Cardiac septum (tissue), 1 donor: ENCODE measurements at regions of chr6 and their contacts with region 1.

Region 1: DNA sequence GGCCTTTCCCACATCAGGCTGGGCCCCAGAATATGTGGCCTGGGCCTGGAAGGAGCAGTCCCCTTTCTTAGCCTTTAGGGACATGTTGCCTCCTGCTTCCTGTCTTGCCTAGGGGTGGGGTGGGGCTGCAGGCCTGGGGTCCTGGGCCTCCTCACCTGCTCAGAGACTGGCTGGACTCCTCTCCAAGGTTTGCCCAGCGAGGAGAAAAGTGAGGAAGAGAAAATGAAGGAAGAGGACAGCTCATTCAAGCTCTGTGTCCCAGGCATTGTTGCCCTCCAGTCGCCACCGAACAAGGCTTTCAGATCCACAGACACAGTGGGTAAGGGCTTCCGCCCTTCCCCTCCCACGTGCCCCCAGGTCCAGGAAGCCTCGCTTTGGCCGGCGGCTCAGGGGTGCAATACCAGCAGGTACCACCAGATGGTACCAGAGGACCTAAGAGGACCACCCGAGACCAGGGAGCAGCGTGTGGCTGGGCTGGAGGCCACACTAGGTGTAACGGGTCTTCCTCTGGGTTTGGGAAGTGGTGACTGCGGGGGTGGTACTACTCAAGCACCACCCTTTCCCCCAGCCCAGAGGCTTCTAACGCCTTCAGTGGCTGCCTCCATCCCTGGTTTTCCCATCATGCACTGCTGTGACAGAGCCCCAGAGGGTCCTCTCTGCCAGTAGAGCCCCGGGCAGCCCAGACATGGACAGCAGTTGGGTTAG is 5.5 kb upstream of the BAK1 start:
- DNase-seq: peak; percentile 88

Region 2: DNA sequence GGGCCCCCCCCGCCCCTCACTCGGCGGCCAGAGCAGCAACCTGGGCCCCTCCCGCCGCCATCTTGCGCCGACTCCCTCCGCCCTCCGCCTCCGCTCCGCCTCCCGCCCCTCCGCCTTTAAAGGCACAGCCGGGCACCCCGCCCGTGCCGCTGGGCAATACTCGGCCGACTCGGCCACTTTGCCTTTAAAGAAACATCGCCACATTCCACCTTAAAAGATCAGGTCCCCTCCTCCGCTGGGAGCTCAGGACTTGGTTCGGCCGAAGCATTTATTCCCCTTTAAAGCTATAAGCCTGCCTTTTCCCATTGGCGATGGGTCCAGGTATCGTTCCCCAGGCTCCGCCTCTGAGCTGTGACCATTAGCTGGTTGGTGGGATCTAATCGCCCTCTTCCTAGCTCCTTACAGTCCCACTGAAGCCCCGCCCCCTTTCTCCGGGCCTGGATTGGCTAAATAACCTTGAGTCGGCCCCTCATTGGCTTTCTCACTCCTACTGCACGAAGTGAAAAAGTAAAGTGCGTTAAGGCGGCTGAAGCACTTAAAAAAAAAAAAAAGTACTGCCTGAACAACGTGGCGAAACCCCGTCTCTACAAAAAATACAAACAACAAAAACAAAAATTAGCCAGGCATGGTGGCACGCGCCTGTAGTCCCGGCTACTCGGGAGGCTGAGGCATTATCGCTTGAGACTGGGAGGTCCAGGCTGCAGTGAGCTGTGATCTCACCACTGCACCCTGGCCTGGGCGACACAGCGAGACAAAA is 267.7 kb before region 1 on chr6 and contains the start of gene ZBTB22:
- intact Hi-C with region 1: no loop called
- DNase-seq: peak; percentile 97
- total RNA-seq, gene ZBTB22: 19.9 TPM

Region 3: GRCh38 chr6:33620856-33621710 is 35.5 kb after region 1 on chr6 and contains the start of gene ITPR3:
- intact Hi-C with region 1: loop called (anchors 1 kb)
- DNase-seq: no peak
- total RNA-seq, gene ITPR3: 6.9 TPM

Region 4: DNA sequence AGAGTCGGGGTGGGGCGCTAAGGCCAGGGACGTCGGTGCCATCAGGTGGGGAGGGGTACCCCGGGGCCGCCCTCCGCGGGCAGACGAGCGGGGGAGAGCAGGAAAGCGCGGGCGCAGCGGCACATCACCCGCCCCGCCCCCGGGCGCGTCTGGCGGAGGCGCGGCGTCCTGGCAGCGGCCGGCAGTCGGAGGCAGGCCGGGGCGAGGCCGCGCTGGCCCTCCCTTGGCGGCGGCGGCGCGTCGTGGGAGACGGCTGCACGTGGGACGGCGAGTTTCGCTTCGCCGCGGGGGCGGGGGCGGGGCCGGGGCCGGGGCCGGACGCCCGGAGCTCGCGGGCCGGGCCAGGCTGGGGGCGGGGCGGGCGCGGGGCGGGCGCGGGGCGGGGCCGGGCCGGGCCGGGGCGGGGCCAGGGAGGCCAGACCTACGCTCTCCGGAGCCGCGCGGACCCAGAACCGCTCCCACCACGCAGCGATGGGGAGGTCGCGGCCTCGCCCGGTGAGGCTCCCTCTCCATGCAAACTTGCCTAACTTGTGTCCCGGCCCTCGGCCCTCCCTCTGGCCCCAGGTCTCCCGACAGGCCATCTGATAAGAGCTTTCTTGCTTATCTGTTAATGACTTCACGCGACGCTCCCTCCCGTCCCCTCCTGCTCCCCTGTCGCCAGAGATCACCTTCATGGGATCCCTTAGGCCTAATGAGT is 48.1 kb after region 1 on chr6:
- intact Hi-C with region 1: loop called (anchors 2 kb)
- DNase-seq: no peak

Region 5: GRCh38 chr6:33672808-33673207 is 87.3 kb after region 1 on chr6:
- intact Hi-C with region 1: loop called (anchors 2 kb)
- DNase-seq: peak; percentile 93

Region 6: GRCh38 chr6:33700391-33701050 is 115.0 kb after region 1 on chr6:
- intact Hi-C with region 1: loop called (anchors 2 kb)
- DNase-seq: no peak

Region 7: DNA sequence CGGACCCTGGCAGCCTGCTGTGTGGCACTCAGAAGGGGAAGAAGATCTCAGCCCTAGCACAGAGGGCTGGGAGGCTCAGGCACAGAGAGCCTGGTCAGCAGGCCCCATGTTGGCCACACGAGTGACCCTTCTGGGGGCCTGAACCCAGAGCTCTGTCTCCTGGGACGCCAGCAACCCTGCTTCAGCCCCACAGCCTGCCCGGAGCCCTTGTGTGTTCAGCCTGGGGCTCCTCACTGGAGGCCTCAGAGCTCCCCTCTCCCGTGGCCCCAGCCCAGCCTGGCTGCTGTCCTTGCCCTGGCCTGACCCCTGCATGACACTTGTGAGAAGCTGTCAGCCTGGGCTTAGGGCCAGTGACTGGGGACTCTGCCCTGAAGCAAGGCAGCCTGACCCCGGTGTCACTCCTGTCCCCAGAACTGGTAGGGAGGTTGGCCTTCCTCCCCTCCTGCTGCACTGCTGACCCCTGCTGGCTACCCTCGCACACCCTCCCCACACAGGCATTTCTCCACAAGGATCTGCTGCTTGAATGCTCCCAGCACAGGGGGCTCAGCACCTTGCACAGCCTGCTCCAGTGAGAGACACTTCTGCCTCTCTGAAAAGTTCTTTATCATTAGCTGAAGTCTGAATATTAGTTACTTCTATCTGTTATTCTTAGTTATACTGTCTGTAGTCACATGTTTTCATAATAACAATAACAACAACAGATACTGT is 176.5 kb after region 1 on chr6:
- intact Hi-C with region 1: loop called (anchors 2 kb)
- DNase-seq: peak; percentile 86

Region 8: DNA sequence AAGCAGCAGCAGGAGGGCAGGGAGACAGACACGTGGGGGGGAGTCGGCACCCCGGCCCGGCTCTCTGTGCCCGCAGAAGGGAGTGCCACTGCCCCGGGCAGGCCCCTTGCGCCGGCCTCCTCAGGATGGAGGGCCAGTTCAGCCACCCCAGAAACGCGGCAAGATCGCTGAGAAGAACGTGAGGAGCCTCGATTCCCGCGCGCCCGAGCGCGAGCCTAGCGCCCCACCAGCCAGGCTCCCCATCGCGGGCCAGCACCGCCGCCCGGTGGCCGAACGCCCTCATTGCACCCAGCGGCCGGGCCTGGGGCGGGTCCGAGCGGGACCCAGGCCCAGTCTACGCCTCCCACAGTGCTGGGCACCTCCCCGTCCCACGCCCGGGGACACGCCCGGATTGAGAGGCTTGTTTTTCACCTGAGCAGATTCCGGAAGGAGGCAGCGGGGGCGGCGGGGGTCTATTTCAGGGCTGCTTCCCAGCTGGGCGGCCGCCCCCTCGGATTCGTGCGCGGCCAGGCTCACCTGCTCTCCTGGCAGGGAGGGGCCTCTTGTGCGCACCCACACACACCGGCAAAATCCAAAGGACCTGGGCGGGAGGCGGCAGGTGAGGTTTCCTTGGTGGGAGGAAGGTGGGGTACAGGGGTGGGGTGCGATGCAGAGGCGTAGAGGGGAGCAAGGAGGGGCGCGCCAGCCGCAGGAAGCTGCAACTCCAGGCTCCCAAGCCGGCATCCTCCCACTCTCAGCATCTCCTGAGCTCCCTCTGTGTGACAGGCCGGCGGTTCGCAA is 569.3 kb after region 1 on chr6:
- intact Hi-C with region 1: loop called (anchors 5 kb)
- DNase-seq: peak; percentile 69

Region 9: DNA sequence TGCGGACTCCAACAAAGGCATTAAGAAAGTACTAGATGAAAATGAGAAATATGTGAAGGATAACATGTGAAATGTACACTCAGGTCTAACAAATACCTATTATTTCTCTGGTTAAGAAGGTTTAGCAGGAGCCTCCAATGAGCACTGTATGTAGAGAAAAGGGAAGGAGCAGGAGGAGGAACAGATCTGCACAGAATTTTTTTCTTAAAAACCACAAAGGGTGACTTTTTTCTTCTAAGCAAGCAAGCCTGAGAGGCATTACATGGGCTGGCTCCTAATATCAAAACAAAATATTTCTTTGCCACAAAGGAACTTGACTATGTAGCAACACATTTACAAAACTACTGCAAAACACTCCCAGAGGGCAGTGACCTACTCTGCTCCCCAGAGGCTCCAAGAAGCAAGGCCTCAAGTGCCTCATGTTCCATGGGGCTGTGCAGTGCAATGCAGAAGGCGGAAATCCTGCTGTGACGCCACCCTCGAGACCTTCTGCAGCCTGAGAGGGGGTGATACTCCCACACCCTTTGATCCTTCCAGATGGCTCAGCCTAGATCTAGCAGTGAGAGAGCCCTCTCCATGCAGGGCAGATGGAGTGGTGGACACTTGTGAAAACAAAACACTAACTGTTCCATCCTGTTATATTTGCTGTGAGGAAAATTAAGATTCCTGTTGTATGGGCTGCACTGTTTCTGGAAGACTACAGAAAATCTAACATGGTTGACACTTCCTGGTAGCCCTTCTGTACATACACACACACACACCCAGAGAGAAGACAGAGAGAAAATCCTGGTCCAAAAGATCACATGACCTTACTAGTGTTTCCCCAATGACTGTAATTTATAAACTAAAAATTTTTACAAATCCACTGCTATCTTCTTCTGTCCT is 699.2 kb after region 1 on chr6:
- intact Hi-C with region 1: no loop called
- DNase-seq: peak; percentile 86